ENCODE measurements at regions of chr13 and their contacts with region 1.

Region 1: DNA sequence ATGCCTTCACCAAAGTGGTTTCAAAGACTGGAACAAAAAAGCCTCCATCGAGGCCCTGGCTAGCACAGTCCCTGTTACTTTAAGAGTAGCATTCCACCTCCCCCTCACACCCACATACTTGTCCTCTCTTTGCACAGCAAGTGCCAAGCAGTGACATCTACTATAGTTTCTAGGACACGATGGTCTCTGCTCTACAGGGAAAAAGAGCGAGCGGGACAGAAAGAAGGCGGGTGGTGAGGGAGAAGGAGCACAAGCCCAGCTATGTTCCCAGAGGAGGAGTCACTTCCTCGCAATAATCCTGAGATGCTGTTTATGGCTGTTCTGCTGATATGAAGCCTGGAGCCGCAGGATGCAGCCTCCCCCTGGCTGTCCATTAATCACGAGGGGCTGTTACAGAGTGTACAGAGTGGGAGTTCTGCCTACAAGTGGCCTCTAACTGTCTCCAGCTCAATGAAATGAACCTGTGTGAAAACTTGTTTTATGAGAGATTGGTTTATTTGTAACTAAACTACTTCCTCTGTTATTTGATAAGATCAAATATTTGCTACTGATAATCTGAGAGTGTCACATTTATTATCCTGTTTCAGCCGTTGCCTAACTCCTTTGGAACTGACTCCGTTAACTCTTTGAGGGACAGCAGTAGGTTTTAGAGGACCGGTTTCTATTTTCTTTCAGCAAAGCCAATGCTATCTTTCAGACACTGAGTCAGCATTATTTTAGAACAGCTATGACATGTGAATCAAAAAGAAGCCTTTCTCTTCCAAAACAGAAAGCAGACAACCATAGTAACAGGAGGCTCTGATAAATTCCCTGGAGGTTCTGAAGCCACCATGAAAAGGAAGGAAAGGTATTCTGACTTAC is 208.0 kb downstream of the SPRY2 start:
- DNase-seq: peak in 4 of 5 donors; percentile 69 to 85 (median 74)
- ATAC-seq: peak; percentile 95 to 97 (median 96)
- H3K4me3 ChIP-seq: peak overlapping the region in 11 of 12 donors; percentile 5 to 51 (median 36)
- H3K27ac ChIP-seq: peak overlapping the region; percentile 80 to 95 (median 88)
- H3K4me1 ChIP-seq: peaks cover 5 to 44% (median 29%) of the 10 kb centered on the region in 12 donors
- H3K27me3 ChIP-seq: no peaks in the 10 kb centered on the region
- CTCF ChIP-seq: peak in 3 of 12 donors; percentile 13 to 30 (median 26)
- POLR2A ChIP-seq: peak in 1 of 2 donors; percentile 55

Region 2: DNA sequence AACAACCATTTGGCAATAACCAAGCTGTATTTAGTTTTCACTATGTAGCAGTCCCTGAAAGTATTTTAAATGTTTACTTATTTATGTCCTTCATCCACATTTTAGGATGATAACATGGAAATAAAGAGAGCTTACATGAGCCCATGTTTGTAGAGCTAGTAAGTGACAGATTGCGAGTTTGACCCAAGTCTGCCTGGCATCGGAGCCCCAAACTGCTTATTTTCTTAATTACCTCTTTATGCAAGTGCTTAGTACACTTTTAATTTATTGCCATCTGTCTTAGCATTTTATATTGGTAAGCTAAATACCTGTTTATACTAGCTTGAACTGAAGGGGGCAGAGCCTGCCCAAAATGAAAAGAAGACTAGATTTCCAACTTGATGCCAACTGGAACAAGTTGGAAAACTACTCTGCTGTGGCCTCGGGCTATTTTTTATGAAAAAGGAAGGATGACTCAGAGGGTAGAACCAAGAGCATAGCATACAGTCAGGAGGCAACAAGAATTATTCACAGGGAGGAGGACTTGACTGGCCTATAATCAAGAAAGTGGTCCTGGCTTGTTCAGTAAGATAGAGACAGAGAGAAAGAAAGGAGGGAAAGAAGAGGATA is 501.8 kb before region 1 on chr13:
- intact Hi-C with region 1: loop called in 3 of 10 experiments (anchors 10 kb)
- DNase-seq: peak in 1 of 5 donors; percentile 10
- ATAC-seq: peak in 3 of 4 donors; percentile 82 to 91 (median 90)
- H3K4me3 ChIP-seq: no peak overlapping the region
- H3K27ac ChIP-seq: peak overlapping the region in 2 of 12 donors; percentile 5 to 12
- H3K4me1 ChIP-seq: peaks cover 0 to 11% (median 0%) of the 10 kb centered on the region in 12 donors
- H3K27me3 ChIP-seq: no peaks in the 10 kb centered on the region
- CTCF ChIP-seq: peak in 10 of 12 donors; percentile 24 to 54 (median 38)
- POLR2A ChIP-seq: no peak

Region 3: DNA sequence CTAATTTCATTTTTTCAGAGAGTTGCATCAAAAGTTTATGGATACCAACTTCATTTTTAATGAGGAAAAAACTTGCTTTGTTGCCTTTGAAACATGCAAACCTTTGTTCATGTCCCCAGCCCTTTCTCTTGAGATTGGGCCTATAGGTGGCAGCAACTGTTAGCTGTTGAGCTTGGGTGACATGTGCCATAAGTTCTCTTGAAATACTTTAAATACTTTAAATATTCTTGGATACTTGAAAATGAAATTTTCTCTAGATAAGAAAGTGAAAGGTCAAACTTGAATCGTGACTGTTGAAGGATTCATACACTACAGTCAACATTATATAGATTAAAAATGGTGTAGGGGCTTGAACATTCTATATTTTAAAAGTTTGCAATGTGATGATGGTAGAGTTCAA is 357.1 kb before region 1 on chr13:
- intact Hi-C with region 1: loop called in 2 of 10 experiments (anchors 5 kb)
- DNase-seq: peak in 2 of 5 donors; percentile 17 to 37
- ATAC-seq: peak in 3 of 4 donors; percentile 61 to 70 (median 69)
- H3K4me3 ChIP-seq: no peak overlapping the region
- H3K27ac ChIP-seq: no peak overlapping the region
- H3K4me1 ChIP-seq: peaks cover 0 to 24% (median 4%) of the 10 kb centered on the region in 12 donors
- H3K27me3 ChIP-seq: no peaks in the 10 kb centered on the region
- CTCF ChIP-seq: peak in 11 of 12 donors; percentile 44 to 75 (median 60)
- POLR2A ChIP-seq: no peak

Region 4: GRCh38 chr13:80048802-80049201 is 84.2 kb before region 1 on chr13:
- intact Hi-C with region 1: loop called in 5 of 10 experiments (anchors 2 to 10 kb)
- DNase-seq: peak; percentile 86 to 93 (median 90)
- ATAC-seq: peak; percentile 98 to 99 (median 98)
- H3K4me3 ChIP-seq: no peak overlapping the region
- H3K27ac ChIP-seq: peak overlapping the region in 11 of 12 donors; percentile 6 to 80 (median 45)
- H3K4me1 ChIP-seq: peaks cover 0 to 35% (median 28%) of the 10 kb centered on the region in 12 donors
- H3K27me3 ChIP-seq: no peaks in the 10 kb centered on the region
- CTCF ChIP-seq: no peak
- POLR2A ChIP-seq: no peak

Region 5: DNA sequence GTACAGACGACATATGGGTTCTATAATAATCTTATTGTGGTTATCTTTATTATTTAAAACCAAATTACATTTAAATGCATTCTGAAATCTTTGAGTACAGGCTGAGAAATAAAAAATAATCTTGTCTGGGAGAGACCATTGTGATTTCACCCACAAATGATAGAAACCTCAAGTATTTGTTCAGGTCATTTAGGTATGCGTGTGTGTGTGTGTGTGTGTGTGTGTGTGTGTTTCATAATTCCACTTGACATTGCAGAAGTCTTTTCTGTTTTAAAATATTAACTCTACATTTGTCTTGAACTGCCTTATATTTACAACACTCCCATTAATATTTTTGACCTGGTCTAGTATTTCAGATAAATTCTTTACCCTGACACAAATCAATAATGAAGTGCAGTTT is 81.1 kb after region 1 on chr13:
- intact Hi-C with region 1: no loop called
- DNase-seq: no peak
- ATAC-seq: no peak
- H3K4me3 ChIP-seq: no peak overlapping the region
- H3K27ac ChIP-seq: no peak overlapping the region
- H3K4me1 ChIP-seq: no peaks in the 10 kb centered on the region
- H3K27me3 ChIP-seq: no peaks in the 10 kb centered on the region
- CTCF ChIP-seq: no peak
- POLR2A ChIP-seq: no peak

Region 6: GRCh38 chr13:80276371-80277289 is 143.7 kb after region 1 on chr13:
- intact Hi-C with region 1: no loop called
- DNase-seq: peak in 1 of 5 donors; percentile 27
- ATAC-seq: peak in 3 of 4 donors; percentile 75 to 95 (median 84)
- H3K4me3 ChIP-seq: no peak overlapping the region
- H3K27ac ChIP-seq: peak overlapping the region in 7 of 12 donors; percentile 9 to 60 (median 21)
- H3K4me1 ChIP-seq: peaks cover 0 to 23% (median 9%) of the 10 kb centered on the region in 12 donors
- H3K27me3 ChIP-seq: no peaks in the 10 kb centered on the region
- CTCF ChIP-seq: peak in 2 of 12 donors; percentile 7 to 25
- POLR2A ChIP-seq: no peak

Region 7: DNA sequence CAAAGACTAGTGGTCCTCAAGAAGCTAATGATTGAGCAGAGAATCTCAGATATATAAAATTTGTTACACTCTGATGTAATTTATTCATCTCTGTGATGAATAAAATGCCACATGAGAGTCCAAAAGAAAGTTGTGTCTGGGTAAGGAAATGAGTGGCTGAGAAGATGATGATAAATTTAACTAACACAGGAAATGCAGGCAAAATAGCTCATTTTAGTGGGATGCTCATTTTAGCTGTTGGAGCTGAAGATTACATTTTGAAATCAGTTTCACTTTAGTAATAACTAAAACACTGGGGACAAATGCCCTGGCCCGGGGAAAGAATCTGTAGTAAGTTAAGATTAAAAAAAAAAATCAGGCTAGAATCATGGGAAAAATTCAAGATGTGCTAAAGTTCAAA is 172.8 kb after region 1 on chr13:
- intact Hi-C with region 1: loop called in 1 of 10 experiments (anchors 10 kb)
- DNase-seq: no peak
- ATAC-seq: no peak
- H3K4me3 ChIP-seq: peak overlapping the region in 2 of 12 donors; percentile 6 to 27
- H3K27ac ChIP-seq: peak overlapping the region in 11 of 12 donors; percentile 14 to 66 (median 44)
- H3K4me1 ChIP-seq: peaks cover 0 to 29% (median 17%) of the 10 kb centered on the region in 12 donors
- H3K27me3 ChIP-seq: no peaks in the 10 kb centered on the region
- CTCF ChIP-seq: no peak
- POLR2A ChIP-seq: no peak

Measured in heart left ventricle (tissue), 16 donors.